HCT116 (cell line): ENCODE measurements at regions of chr13 and their contacts with region 1.

Region 1: DNA sequence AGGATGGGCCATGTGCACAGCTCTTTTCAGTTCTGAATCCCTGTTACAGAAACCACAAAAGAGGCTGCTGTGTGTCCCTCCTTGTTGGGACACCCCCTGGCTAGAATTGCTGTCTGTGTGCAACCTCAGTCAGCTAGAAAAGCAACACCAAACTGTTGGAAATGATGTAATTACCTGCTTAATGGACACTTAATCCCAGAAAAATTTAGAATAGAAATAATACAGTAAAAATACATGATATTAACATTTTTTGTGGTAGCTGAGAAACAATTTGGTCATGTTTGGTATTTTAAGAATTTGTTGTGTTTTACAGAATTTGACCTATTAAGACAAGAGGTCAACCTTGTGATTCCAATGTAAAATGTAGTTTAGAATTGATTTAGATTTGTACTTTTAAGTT is 46.8 kb downstream of the FAM124A start:
- DNase-seq: no peak
- ATAC-seq: no peak
- H3K4me3 ChIP-seq: no peak overlapping the region
- H3K27ac ChIP-seq: no peak overlapping the region
- H3K4me1 ChIP-seq: no peaks in the 10 kb centered on the region
- H3K27me3 ChIP-seq: no peaks in the 10 kb centered on the region
- CTCF ChIP-seq: no peak
- POLR2A ChIP-seq: no peak
- RAD21 ChIP-seq: no peak

Region 2: DNA sequence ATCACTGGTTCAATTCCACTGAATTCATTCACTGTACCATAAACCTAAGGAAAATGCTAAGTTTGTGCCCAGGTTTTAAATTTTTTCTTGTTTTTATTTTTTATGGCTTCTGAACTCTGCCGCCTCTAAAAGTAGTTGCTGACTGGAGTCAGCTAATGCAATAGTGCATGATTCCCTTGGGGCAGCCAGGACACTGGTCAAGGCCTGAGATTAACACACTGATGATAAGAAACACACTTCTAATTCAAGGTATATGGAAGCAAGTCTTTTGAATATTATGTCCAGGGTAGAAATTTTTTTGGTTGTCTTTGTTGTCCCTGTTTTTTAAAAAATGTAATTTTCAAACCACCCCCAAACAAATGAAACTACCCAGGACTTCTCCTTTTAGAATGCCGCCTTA is 1949.1 kb before region 1 on chr13:
- CTCF ChIA-PET with region 1: no interaction called
- POLR2A ChIA-PET with region 1: no interaction called
- RAD21 ChIA-PET with region 1: no interaction called
- intact Hi-C with region 1: loop called (anchors 10 kb)
- DNase-seq: no peak
- ATAC-seq: no peak
- H3K4me3 ChIP-seq: no peak overlapping the region
- H3K27ac ChIP-seq: no peak overlapping the region
- H3K4me1 ChIP-seq: peaks cover 0 to 3% of the 10 kb centered on the region in 2 experiments; a peak in 2 of 4 replicates
- H3K27me3 ChIP-seq: no peaks in the 10 kb centered on the region
- CTCF ChIP-seq: no peak
- POLR2A ChIP-seq: no peak
- RAD21 ChIP-seq: no peak

Region 3: DNA sequence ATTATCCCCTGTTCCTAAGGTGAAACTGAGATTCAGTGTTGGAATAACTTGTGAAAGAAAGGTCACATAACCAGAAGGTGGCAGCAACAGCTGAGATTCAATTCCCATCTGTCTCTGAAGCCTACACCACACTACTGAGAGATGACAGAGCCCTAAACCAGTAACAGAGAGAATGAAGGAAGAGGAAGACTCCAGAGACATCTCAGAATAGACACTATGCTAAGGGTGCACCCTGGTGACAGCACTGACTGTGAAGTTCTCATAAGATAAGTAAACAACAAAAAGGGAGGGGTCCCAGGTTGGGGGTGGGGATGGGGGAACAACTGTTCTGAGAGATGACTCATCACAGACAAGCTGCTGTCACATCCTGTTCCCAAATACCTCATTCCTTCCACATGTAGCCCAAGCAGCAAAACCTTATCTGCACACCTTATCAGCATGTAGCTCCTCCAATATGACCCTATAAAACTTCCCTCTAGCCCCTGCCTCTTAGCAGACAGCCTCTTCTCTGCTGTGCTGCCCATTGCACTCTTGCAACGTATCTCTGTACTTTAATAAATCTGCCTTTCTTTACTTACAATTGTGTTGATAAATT is 802.0 kb after region 1 on chr13:
- CTCF ChIA-PET with region 1: no interaction called
- POLR2A ChIA-PET with region 1: no interaction called
- RAD21 ChIA-PET with region 1: no interaction called
- intact Hi-C with region 1: no loop called
- DNase-seq: no peak
- ATAC-seq: peak; percentile 66
- H3K4me3 ChIP-seq: no peak overlapping the region
- H3K27ac ChIP-seq: no peak overlapping the region
- H3K4me1 ChIP-seq: no peaks in the 10 kb centered on the region
- H3K27me3 ChIP-seq: no peaks in the 10 kb centered on the region
- CTCF ChIP-seq: no peak
- POLR2A ChIP-seq: no peak
- RAD21 ChIP-seq: peak; percentile 27; the same call in 1 of the 2 replicates